ENCODE measurements at regions of chr10 and their contacts with region 1.

Region 1: DNA sequence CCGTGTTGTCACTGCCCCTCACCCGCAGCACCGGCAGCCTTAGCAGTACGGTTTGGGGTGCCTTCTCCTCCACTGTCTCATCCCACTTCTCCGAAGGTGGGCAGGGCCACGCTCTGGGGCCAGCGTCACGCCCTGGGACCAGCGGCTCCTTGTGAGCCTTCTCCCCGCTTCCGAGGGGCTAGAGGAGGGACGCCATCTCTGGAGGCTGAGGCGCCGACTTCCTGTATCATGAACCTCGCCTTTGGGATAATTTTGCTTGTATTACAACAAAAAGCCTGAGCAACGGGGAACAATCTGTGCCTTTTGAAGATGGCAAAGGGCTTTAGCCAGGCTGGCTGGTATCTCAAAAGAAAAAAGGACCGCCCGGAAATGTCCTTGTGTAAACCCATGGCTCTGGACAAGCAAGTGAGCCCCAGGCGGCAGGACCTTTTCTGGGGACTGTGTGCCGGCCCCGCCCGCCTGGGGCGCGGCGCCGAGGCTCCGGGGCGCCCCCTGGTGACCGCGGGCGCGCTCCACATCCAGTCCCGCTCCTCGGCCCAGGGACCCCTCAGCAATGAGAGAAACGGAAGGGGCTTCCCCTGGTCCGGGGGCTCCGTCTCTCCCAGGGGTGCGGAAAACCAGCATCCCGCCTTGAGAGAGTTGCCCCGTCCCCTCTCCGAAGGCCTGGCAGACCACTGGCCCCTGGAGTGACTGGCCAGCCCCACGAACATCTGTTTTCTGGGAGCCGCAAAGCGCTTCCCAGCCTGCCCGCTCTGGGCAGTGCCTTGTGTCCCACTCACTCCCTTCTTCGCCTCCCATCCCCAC is 3.8 kb downstream of the DEPP1 start:
- DNase-seq: peak in 1 of 2 experiments; percentile 81
- H3K4me3 ChIP-seq: peak overlapping the region; percentile 54; the same call in 1 of the 2 replicates
- H3K27ac ChIP-seq: no peak overlapping the region
- H3K4me1 ChIP-seq: peaks cover 54% of the 10 kb centered on the region
- H3K27me3 ChIP-seq: no peaks in the 10 kb centered on the region
- CTCF ChIP-seq: peak; percentile 92

Region 2: GRCh38 chr10:43227911-43228782 is 1746.7 kb before region 1 on chr10:
- CTCF ChIA-PET with region 1: interaction called, 11 read pairs
- POLR2A ChIA-PET with region 1: no interaction called
- intact Hi-C with region 1: no loop called
- DNase-seq: peak in 1 of 2 experiments; percentile 1
- H3K4me3 ChIP-seq: no peak overlapping the region
- H3K27ac ChIP-seq: no peak overlapping the region
- H3K4me1 ChIP-seq: no peaks in the 10 kb centered on the region
- H3K27me3 ChIP-seq: peaks cover 15% of the 10 kb centered on the region
- CTCF ChIP-seq: no peak

Region 3: GRCh38 chr10:44640431-44640830 is 334.4 kb before region 1 on chr10:
- CTCF ChIA-PET with region 1: no interaction called
- POLR2A ChIA-PET with region 1: no interaction called
- intact Hi-C with region 1: no loop called
- DNase-seq: no peak
- H3K4me3 ChIP-seq: no peak overlapping the region
- H3K27ac ChIP-seq: no peak overlapping the region
- H3K4me1 ChIP-seq: no peaks in the 10 kb centered on the region
- H3K27me3 ChIP-seq: no peaks in the 10 kb centered on the region
- CTCF ChIP-seq: no peak

Region 4: GRCh38 chr10:44752451-44753441 is 222.1 kb before region 1 on chr10:
- CTCF ChIA-PET with region 1: no interaction called
- POLR2A ChIA-PET with region 1: no interaction called
- intact Hi-C with region 1: no loop called
- DNase-seq: no peak
- H3K4me3 ChIP-seq: no peak overlapping the region
- H3K27ac ChIP-seq: no peak overlapping the region
- H3K4me1 ChIP-seq: no peaks in the 10 kb centered on the region
- H3K27me3 ChIP-seq: peaks cover 20% of the 10 kb centered on the region
- CTCF ChIP-seq: no peak

Region 5: DNA sequence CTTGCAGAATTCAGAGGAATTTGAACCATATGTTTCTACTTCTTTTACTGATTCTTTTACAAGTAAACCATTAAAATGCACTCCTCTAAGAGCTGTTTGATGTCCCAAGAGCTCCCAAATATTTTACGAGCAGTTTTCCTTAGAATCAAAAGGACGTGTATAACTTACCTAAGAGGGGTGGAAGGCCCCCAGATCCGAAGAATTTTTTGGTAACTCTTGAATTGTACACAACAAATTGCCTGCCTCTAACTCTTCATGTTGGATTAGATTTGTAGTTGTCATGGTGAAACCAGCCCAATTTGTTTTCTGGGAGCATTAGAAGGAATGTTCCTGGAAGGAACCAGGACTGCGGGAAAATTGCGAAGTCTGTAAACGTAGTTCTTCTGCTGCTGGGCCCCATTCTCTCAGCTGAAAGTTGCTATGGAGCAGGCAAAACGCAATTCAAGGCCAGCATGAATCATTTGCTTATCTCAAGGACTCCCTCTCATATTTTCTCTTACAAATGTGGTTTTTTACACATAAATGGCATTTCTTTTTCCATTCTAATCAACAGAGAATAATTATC is 188.5 kb before region 1 on chr10:
- CTCF ChIA-PET with region 1: no interaction called
- POLR2A ChIA-PET with region 1: no interaction called
- intact Hi-C with region 1: no loop called
- DNase-seq: no peak
- H3K4me3 ChIP-seq: no peak overlapping the region
- H3K27ac ChIP-seq: no peak overlapping the region
- H3K4me1 ChIP-seq: no peaks in the 10 kb centered on the region
- H3K27me3 ChIP-seq: peaks cover 10% of the 10 kb centered on the region; the same call in 1 of the 2 replicates
- CTCF ChIP-seq: no peak

Region 6: DNA sequence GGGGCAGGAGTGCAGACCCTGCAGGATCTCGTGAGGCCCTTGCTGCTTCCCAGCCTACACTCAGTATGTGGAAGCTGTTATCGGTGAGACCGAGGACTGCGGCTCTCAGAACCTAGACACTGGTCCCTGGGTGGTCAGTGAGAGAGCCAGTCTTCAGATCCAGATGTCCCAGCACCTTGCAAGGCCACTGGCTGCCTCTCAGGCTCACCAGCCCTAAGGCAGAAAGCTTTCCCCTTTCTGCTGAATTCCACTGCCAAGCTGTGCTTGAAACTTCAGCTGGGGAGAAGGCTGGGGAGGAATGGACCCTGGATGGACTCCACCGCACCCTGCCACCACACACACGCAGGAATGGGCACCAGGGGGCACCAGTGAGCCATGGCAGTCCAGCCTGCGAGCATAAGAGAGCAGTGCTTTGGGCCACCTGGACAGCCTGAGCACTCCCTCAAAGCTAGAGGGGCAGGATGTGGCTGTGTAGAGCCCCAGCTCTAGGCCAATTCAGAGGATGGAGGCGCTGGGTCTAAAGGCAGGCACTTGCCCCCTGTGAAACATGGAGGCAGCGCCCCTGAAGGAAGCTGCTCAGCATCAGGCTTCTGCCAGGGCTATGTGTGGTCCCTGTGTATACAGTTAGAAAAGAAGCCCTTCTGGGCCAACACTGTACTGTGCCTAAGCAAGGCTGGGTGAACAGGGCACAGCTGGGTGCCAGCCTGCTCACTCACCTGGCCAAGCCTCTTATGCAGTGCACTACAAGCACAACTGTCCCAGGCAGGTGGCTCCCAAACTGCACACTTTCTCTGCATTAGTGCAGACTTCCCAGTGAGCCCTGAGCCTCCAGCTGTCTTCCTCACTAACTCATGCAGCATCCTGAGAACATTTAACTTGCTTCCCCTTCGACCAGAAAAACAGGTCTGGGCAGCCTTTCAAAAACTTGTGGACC is 42.0 kb before region 1 on chr10:
- CTCF ChIA-PET with region 1: interaction called, 3 read pairs
- POLR2A ChIA-PET with region 1: interaction called, 3 read pairs
- intact Hi-C with region 1: loop called (anchors 1 kb)
- DNase-seq: peak; percentile 52 to 86
- H3K4me3 ChIP-seq: no peak overlapping the region
- H3K27ac ChIP-seq: no peak overlapping the region
- H3K4me1 ChIP-seq: no peaks in the 10 kb centered on the region
- H3K27me3 ChIP-seq: 0 out of 2 replicates have a peak, but pooled peaks cover 6% of the 10 kb centered on the region
- CTCF ChIP-seq: peak; percentile 97

Region 7: DNA sequence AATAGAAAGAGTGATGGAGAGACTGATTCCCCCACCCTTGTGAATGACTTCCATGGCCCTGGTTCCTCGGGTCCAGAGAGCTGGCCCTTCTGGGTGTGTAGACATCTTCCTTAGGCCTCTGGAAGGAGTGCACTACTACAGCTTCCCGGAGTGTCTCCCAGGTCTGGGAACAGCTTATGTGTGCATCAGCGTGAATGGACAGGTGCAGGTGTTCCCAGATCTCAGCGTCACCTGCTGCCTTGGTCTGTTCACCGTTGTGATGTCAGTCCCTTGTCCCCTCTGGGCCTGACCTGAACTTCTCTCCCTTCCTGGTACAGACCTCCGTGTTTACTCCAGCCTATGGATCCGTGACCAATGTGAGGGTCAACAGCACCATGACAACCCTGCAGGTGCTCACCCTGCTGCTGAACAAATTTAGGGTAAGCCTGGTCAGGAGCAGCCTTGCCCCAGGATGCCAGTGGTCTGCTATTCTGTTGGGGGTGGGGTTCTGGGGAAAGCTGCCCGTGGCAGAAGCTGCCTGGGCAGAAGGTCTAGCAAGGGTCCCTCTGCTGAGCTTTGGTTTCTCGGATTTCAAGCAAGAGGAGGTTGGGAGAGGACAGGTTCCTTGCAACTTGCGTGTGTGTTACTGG is 14.2 kb after region 1 on chr10:
- CTCF ChIA-PET with region 1: interaction called, 13 read pairs
- POLR2A ChIA-PET with region 1: interaction called, 3 read pairs
- intact Hi-C with region 1: no loop called
- DNase-seq: no peak
- H3K4me3 ChIP-seq: no peak overlapping the region
- H3K27ac ChIP-seq: no peak overlapping the region
- H3K4me1 ChIP-seq: peaks cover 11% of the 10 kb centered on the region
- H3K27me3 ChIP-seq: no peaks in the 10 kb centered on the region
- CTCF ChIP-seq: no peak

Region 8: DNA sequence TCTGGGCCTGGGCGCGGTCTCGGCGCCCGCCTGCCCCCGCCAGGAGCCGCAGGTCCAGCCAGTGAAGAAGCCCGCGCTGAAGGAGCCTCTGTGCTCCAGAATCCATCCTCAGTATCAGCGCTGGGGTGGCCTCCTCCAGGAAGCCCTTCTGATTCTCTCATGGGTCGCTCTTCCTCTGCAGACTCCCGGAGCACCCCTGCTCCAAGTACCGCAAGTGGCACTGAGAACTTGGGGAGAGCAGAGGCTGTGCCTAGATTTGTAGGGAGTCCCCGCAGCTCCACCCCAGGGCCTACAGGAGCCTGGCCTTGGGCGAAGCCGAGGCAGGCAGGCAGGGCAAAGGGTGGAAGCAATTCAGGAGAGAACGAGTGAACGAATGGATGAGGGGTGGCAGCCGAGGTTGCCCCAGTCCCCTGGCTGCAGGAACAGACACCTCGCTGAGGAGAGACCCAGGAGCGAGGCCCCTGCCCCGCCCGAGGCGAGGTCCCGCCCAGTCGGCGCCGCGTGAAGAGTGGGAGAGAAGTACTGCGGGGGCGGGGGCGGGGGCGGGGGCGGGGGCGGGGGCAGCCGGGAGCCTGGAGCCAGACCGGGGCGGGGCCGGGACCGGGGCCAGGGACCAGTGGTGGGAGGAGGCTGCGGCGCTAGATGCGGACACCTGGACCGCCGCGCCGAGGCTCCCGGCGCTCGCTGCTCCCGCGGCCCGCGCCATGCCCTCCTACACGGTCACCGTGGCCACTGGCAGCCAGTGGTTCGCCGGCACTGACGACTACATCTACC is 398.9 kb after region 1 on chr10 and contains the start of gene ALOX5:
- CTCF ChIA-PET with region 1: no interaction called
- POLR2A ChIA-PET with region 1: no interaction called
- intact Hi-C with region 1: loop called (anchors 5 kb)
- DNase-seq: peak; percentile 52 to 91
- H3K4me3 ChIP-seq: peak within 1 kb of the TSS; percentile 84
- H3K27ac ChIP-seq: peak within 1 kb of the TSS; percentile 99
- H3K4me1 ChIP-seq: peaks cover 37% of the 10 kb centered on the region
- H3K27me3 ChIP-seq: no peaks in the 10 kb centered on the region
- CTCF ChIP-seq: no peak
- total RNA-seq, gene ALOX5: 66.5 and 86.8 TPM in 2 replicates

Measured in PC-9 (cell line).